Activated CD4-positive, alpha-beta memory T cell treated with anti-CD3 and anti-CD28 coated beads, Interleukin-2, amount 10 ng/mL, durations not matched to agents 7 days and 5 days (primary cell): ENCODE measurements at regions of chr11 and their contacts with region 1.

Region 1: GRCh38 chr11:65868076-65868667 is 4.4 kb downstream of the EFEMP2 start:
- DNase-seq: no peak
- H3K4me3 Mint-ChIP-seq: no peak overlapping the region
- H3K27ac Mint-ChIP-seq: no peak overlapping the region
- H3K4me1 Mint-ChIP-seq: peaks cover 34% of the 10 kb centered on the region
- H3K27me3 Mint-ChIP-seq: peaks cover 7% of the 10 kb centered on the region

Region 2: GRCh38 chr11:65850831-65851811 is 17.1 kb before region 1 on chr11:
- CTCF ChIA-PET with region 1: interaction called, 4 read pairs
- POLR2A ChIA-PET with region 1: interaction called, 135 read pairs
- DNase-seq: peak; percentile 29
- H3K4me3 Mint-ChIP-seq: no peak overlapping the region
- H3K27ac Mint-ChIP-seq: no peak overlapping the region
- H3K4me1 Mint-ChIP-seq: peaks cover 29% of the 10 kb centered on the region
- H3K27me3 Mint-ChIP-seq: no peaks in the 10 kb centered on the region

Region 3: DNA sequence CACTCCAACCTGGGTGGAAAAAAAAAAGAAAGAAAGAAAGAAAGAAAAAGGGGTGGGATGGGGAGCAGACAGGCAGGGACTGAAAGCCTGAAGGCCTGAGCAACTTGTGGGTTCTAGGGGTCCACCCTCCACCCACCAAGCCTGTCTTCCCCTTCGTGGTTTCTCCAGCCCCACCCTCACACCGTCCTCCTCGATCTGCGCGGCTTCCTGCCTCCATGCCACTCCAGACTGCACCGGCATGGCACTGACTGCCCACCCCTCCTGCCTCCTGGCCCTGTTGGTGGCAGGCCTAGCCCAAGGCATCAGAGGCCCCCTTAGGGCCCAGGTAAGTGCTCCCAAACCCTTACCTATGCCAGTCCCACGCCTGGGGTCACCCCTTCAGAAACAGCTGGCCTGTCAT is 11.4 kb after region 1 on chr11 and contains the start of gene CTSW:
- CTCF ChIA-PET with region 1: interaction called, 251 read pairs
- POLR2A ChIA-PET with region 1: interaction called, 284 read pairs
- DNase-seq: peak; percentile 64
- H3K4me3 Mint-ChIP-seq: peak within 1 kb of the TSS; percentile 67
- H3K27ac Mint-ChIP-seq: peak within 1 kb of the TSS; percentile 88
- H3K4me1 Mint-ChIP-seq: peaks cover 57% of the 10 kb centered on the region
- H3K27me3 Mint-ChIP-seq: no peaks in the 10 kb centered on the region
- total RNA-seq, gene CTSW: 75.9 to 80.5 TPM